ENCODE measurements at regions of chr4 and their contacts with region 1.

Region 1: DNA sequence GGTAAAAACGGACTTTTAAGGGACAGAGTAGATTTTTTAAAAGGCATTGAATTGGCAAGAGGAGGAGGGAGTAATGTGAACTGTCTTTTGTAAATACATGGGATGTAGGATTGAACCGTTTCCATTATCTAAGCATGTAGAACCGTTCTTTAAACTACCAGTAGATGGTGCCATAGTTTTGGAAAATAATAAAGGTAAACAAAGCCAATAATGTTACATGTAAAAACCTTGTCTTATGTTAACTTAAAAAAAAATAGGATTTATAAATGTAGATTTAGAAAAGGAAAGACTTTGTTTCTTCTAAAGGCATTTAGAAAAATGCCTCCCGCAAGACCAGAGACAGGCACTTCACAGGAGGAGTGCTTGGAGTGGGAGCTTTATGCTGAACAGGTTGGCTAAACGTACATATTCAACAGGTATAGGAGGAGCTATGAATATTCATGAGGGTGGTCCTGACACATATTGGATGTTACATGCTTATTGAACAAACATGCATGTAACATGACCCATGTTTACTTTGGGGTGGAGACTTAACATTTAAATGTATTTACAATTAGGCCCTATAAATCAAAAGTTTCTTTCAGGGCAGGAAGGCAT is 45.5 kb upstream of the FAM241A start:
- DNase-seq: no peak
- ATAC-seq: peak; percentile 74 to 81
- H3K4me3 ChIP-seq: no peak overlapping the region
- H3K27ac ChIP-seq: no peak overlapping the region
- H3K4me1 ChIP-seq: no peaks in the 10 kb centered on the region
- H3K27me3 ChIP-seq: no peaks in the 10 kb centered on the region

Region 2: GRCh38 chr4:112231779-112232713 is 132.2 kb after region 1 on chr4 and contains the start of gene AP1AR:
- intact Hi-C with region 1: loop called in 3 of 4 experiments (anchors 1 to 5 kb)
- DNase-seq: peak; percentile 86 to 94 (median 93)
- ATAC-seq: peak; percentile 89 to 90
- H3K4me3 ChIP-seq: peak within 1 kb of the TSS; percentile 66
- H3K27ac ChIP-seq: peak within 1 kb of the TSS; percentile 98
- H3K4me1 ChIP-seq: no peaks in the 10 kb centered on the region
- H3K27me3 ChIP-seq: no peaks in the 10 kb centered on the region
- total RNA-seq, gene AP1AR: 9.8 to 11.6 (median 10.9) TPM

Region 3: DNA sequence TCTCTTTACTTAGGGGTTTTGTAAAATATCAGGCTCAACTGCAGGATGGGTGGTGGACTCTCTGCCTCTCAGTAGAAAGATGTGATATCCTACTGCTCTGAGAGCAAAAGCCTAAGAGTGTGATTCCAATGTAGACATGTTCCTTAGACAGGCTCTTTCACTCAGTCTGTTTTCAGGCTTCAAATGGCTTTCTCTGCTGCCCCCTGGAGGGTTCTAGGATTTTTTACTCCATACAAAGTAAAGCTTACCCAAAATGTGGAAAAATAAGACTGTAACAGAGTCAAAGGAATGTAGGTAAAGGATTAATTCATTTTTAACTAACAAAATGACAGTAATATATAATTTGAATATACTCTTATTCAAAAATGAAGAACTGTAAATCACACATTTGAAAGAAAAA is 504.8 kb after region 1 on chr4:
- intact Hi-C with region 1: loop called in 1 of 4 experiments (anchors 5 kb)
- DNase-seq: no peak
- ATAC-seq: peak; percentile 71 to 72
- H3K4me3 ChIP-seq: no peak overlapping the region
- H3K27ac ChIP-seq: no peak overlapping the region
- H3K4me1 ChIP-seq: no peaks in the 10 kb centered on the region
- H3K27me3 ChIP-seq: no peaks in the 10 kb centered on the region